Prostate gland (tissue), 2 donors: ENCODE measurements at regions of chr5 and their contacts with region 1.

Region 1: GRCh38 chr5:143824851-143825720 is 13.1 kb downstream of the HMHB1 start:
- DNase-seq: peak; percentile 75
- H3K4me3 ChIP-seq: no peak overlapping the region
- H3K27ac ChIP-seq: no peak overlapping the region
- H3K4me1 ChIP-seq: no peaks in the 10 kb centered on the region
- H3K27me3 ChIP-seq: no peaks in the 10 kb centered on the region
- CTCF ChIP-seq: peak; percentile 76 to 95 (median 88)
- POLR2A ChIP-seq: no peak

Region 2: GRCh38 chr5:142922223-142922952 is 902.7 kb before region 1 on chr5:
- intact Hi-C with region 1: loop called (anchors 5 kb)
- DNase-seq: no peak
- H3K4me3 ChIP-seq: no peak overlapping the region
- H3K27ac ChIP-seq: no peak overlapping the region
- H3K4me1 ChIP-seq: no peaks in the 10 kb centered on the region
- H3K27me3 ChIP-seq: no peaks in the 10 kb centered on the region
- CTCF ChIP-seq: peak in 3 of 4 experiments; percentile 40 to 74 (median 67)
- POLR2A ChIP-seq: no peak

Region 3: GRCh38 chr5:143016777-143017516 is 808.1 kb before region 1 on chr5:
- intact Hi-C with region 1: loop called (anchors 5 kb)
- DNase-seq: peak; percentile 39
- H3K4me3 ChIP-seq: no peak overlapping the region
- H3K27ac ChIP-seq: no peak overlapping the region
- H3K4me1 ChIP-seq: no peaks in the 10 kb centered on the region
- H3K27me3 ChIP-seq: no peaks in the 10 kb centered on the region
- CTCF ChIP-seq: peak in 3 of 4 experiments; percentile 47 to 59 (median 48)
- POLR2A ChIP-seq: no peak

Region 4: DNA sequence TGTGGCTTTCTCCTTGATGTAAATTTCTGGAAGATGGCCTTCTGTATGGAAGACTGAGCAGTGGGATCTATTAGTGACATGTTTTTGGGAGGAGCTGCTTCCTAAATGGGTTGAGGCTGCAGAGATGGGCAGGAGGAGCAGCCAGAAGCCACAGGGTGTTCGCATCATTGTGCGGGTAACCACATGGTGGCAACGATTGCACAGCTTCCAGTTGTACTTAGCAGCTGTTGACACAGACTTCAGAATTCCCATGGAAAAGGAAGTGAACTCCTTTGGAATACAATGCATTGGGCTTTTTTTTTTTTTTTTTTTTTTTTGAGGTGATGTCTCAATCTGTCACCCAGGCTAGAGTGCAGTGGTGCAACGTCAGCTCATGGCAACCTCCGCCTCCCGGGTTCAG is 718.9 kb before region 1 on chr5:
- intact Hi-C with region 1: loop called (anchors 10 kb)
- DNase-seq: no peak
- H3K4me3 ChIP-seq: no peak overlapping the region
- H3K27ac ChIP-seq: no peak overlapping the region
- H3K4me1 ChIP-seq: peaks cover 14% of the 10 kb centered on the region
- H3K27me3 ChIP-seq: no peaks in the 10 kb centered on the region
- CTCF ChIP-seq: peak in 1 of 4 experiments; percentile 10
- POLR2A ChIP-seq: no peak